ENCODE measurements at regions of chr20 and their contacts with region 1.

Region 1: GRCh38 chr20:62357187-62357667 is 9.9 kb downstream of the LAMA5 start:
- DNase-seq: peak; percentile 88
- H3K27ac ChIP-seq: peak overlapping the region; percentile 100
- CTCF ChIP-seq: no peak

Region 2: GRCh38 chr20:62368976-62369814 is 12.0 kb after region 1 on chr20:
- CTCF ChIA-PET with region 1: interaction called, 11 read pairs
- POLR2A ChIA-PET with region 1: interaction called, 41 read pairs
- DNase-seq: peak; percentile 84
- H3K27ac ChIP-seq: peak overlapping the region; percentile 100
- CTCF ChIP-seq: peak; percentile 59